Activated CD4-positive, alpha-beta T cell treated with anti-CD3 and anti-CD28 coated beads, Interleukin-2, amount 10 ng/mL, durations not matched to agents 24 days and 14 days (primary cell): ENCODE measurements at regions of chr6 and their contacts with region 1.

Region 1: DNA sequence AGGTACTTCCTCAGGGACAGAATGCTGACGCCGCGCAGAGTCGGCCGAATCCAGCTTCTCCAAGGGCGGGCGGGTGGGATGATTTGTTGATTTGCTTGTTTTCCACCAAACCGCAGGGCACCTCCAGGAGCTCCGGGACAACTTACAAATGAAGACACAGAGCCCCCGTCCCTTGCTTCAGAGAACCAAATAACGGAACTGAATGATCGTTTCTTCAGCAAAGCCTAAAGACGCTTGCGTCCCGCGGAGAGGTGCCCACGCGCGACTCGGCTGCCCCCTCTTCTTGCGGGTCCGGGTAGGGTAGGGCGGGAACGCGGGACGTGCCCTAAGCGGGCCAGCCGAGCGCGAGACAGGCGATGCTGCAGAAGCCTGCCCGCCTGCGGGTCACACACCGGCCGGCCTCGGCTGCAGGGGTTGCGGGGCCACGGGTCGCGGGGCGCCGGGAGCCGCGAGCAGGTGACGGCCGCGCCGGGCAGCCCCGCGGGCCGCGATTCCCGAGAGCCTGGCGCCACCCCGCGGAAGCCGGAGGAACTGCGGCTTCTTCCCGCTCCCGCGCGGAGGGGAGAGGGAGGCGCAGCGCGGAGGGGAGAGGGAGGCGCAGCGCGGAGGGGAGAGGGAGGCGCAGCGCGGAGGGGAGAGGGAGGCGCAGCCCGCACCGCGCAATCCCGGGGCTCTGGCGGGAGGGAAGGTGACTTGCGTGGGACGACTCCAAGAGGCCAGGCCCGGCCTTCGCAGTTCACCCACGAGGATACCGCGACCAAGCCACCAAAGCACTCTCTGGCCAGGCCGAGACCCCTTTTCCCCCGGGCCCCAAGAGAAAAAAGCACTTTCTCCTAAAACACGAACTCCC is 7.7 kb upstream of the FOXF2 start:
- DNase-seq: peak; percentile 90
- H3K4me3 Mint-ChIP-seq: no peak overlapping the region
- H3K27ac Mint-ChIP-seq: no peak overlapping the region
- H3K4me1 Mint-ChIP-seq: peaks cover 18% of the 10 kb centered on the region
- H3K27me3 Mint-ChIP-seq: peaks cover 71% of the 10 kb centered on the region

Region 2: DNA sequence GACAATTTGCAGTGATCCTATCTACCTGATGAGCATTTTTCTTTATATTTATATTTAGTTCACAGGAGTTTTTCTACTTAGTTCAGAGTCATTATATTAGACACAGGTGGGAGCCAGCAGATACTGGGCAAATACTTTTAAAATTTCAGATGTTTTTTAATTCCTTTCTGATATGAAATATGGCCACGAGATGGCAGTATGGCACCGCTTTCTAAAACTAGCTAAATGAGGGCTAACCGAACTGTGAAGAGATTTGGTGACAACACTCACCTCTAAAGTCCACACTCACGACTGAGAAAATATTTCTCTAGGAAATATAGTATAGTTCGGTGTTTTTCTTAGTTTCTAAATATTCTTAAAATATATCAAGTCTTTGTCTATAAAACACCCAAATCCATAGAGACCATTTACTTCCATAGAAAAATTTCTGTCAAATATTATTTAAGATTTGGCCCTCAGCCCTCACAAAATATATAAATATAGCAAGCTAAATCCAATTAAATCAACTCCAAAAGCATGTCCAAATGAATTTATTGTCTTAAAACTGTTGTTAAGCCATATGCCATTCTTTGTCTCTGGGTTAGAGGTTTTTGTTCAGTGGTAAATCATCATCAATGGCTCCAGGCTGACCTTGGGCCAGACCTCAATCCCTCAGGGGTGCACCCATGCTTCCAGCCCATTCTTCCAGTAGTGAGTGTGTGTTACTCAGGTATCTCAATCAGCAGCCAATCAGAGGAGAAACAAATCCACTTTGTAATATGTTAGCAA is 788.4 kb before region 1 on chr6:
- intact Hi-C with region 1: loop called (anchors 5 kb)
- DNase-seq: peak; percentile 90
- H3K4me3 Mint-ChIP-seq: no peak overlapping the region
- H3K27ac Mint-ChIP-seq: peak overlapping the region; percentile 43
- H3K4me1 Mint-ChIP-seq: peaks cover 16% of the 10 kb centered on the region
- H3K27me3 Mint-ChIP-seq: no peaks in the 10 kb centered on the region

Region 3: DNA sequence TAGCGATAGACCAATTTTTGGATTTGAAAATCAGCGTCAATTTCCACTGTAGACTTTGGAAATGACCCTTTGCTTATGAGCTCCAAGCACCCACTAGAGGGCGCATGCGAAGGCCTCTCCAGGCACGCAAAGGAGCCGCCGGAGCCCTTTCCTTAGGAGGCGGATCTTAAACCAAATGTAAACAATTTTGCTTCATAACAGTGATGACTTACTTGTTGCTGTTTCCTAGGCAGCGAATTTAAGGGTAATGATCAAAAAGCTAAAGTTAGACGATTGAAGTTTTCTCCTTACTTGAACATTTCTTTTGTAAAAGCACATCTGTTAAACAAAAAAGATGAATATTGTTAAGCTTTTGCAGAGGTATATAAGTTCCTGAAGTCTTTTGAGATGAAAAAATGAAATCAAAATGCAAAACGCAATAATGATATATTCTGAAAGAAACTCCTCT is 659.6 kb before region 1 on chr6:
- intact Hi-C with region 1: loop called (anchors 5 kb)
- DNase-seq: peak; percentile 93
- H3K4me3 Mint-ChIP-seq: no peak overlapping the region
- H3K27ac Mint-ChIP-seq: no peak overlapping the region
- H3K4me1 Mint-ChIP-seq: peaks cover 8% of the 10 kb centered on the region
- H3K27me3 Mint-ChIP-seq: peaks cover 16% of the 10 kb centered on the region

Region 4: DNA sequence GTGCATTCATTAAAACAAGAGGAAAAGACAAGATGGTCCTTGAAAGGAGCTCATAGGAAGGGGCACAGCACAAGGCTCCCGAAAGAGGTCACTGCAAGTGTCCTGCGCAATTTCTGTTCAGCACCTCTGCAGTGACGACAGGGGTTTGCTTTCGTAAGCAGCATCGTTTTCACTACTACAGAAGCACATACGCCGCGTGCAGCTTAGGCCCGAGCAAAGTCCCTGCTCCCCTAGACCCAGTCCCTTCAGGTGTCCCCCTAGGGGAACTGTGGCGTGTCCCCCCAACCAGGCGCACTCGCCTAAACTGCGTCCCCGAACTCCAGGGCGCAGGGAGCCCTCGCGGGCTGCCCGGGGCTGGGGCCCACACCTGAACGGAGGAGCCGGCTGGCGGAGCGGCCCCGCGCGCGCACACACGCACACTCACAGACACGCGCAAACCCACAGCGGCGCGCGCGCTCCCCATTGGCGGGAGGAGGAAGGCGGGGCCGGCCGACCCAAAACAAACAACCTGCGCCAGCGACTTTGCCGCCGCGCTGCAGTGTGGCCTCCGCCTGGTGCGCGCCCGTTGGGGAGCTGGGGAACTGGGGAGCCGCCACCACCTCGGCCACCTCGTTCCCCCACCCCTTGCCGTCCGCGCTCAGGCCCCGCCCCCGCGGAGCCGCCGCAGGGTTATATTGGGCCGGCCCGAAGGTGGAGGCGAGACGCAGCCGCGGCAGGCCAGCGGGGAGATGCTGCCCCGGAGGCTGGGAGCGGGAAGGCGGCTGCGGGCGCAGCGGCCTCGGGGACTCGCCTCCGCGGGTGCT is 70.1 kb before region 1 on chr6 and contains the start of gene FOXQ1:
- intact Hi-C with region 1: loop called (anchors 2 kb)
- DNase-seq: peak; percentile 64
- H3K4me3 Mint-ChIP-seq: peak within 1 kb of the TSS; percentile 62
- H3K27ac Mint-ChIP-seq: peak within 1 kb of the TSS; percentile 82
- H3K4me1 Mint-ChIP-seq: peaks cover 14% of the 10 kb centered on the region
- H3K27me3 Mint-ChIP-seq: peaks cover 73% of the 10 kb centered on the region
- total RNA-seq, gene FOXQ1: not detected in 2 replicates

Region 5: GRCh38 chr6:1396952-1397868 is 15.5 kb after region 1 on chr6:
- intact Hi-C with region 1: loop called (anchors 2 kb)
- DNase-seq: peak; percentile 91
- H3K4me3 Mint-ChIP-seq: no peak overlapping the region
- H3K27ac Mint-ChIP-seq: no peak overlapping the region
- H3K4me1 Mint-ChIP-seq: peaks cover 5% of the 10 kb centered on the region
- H3K27me3 Mint-ChIP-seq: peaks cover 54% of the 10 kb centered on the region

Region 6: DNA sequence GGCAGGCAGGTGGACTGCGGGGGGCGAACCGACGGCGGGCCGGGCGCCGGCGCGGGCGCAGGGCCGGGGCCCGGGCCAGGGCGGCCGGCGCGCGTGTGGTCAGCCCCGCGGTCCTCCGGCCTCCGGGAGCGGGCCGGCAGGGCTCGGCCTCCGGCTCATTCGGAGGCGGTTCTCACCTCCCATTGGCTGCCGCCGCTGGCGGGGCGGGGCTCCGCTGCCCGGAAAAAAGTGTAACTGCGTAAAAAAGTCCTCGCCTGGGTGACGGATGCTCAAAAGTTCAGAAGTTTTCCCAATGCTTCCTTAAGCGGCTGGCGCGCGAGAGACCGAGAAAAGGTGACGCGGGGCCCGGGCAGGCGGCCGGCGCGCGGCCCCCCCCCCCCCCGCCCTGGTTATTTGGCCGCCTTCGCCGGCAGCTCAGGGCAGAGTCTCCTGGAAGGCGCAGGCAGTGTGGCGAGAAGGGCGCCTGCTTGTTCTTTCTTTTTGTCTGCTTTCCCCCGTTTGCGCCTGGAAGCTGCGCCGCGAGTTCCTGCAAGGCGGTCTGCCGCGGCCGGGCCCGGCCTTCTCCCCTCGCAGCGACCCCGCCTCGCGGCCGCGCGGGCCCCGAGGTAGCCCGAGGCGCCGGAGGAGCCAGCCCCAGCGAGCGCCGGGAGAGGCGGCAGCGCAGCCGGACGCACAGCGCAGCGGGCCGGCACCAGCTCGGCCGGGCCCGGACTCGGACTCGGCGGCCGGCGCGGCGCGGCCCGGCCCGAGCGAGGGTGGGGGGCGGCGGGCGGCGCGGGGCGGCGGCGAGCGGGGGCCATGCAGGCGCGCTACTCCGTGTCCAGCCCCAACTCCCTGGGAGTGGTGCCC is 228.2 kb after region 1 on chr6 and contains the start of gene FOXC1:
- intact Hi-C with region 1: loop called (anchors 2 kb)
- DNase-seq: peak; percentile 83
- H3K4me3 Mint-ChIP-seq: peak within 1 kb of the TSS; percentile 75
- H3K27ac Mint-ChIP-seq: peak within 1 kb of the TSS; percentile 80
- H3K4me1 Mint-ChIP-seq: peaks cover 23% of the 10 kb centered on the region
- H3K27me3 Mint-ChIP-seq: peaks cover 62% of the 10 kb centered on the region
- total RNA-seq, gene FOXC1: 0.07 TPM in 2 replicates

Region 7: DNA sequence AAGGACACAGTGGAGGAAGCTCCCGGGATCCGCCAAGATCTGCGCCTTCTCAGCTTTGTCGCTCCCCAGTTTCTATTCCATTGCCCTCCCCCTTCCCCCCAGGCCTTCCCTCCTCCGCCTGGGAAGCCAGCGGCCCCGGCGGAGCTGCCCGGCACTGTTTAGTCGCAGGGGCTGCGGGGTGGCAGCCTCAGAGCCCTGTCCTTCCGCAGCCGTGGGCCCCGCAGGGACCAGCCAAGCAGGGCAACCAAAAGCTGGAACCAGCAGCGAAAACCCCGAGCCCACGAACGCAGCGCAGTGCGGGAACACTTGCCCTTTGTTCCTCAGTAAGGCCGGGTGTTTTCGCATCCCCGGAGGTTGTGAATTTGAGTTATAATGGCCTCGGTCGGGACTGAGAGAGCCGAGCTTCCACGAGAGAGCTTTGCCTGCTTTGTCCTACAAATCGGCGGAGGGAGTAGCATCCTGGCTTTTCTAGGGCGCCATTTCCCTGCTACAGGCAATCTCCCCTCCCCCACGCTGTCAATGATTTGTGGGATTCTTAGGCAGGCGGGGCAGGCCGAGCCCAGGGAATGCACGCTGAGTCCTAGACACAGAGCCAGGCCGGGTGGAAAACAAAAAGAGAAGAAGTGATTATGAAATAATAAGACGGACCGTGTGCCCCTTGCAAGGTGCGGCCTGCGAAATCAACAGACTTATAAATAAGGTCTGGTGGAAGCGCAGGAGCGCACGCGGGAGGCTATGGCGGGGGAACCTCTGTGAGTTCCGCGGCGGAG is 1849.7 kb after region 1 on chr6:
- intact Hi-C with region 1: loop called (anchors 10 kb)
- DNase-seq: no peak
- H3K4me3 Mint-ChIP-seq: peak overlapping the region; percentile 47
- H3K27ac Mint-ChIP-seq: no peak overlapping the region
- H3K4me1 Mint-ChIP-seq: peaks cover 26% of the 10 kb centered on the region
- H3K27me3 Mint-ChIP-seq: peaks cover 81% of the 10 kb centered on the region